Dorsolateral prefrontal cortex (tissue), 120 donors: ENCODE measurements at regions of chr1 and their contacts with region 1.

Region 1: GRCh38 chr1:113677250-113678158 is 81.8 kb downstream of the PHTF1 start:
- DNase-seq: no peak
- H3K4me3 ChIP-seq: no peak overlapping the region
- H3K27ac ChIP-seq: no peak overlapping the region
- H3K27me3 ChIP-seq: no peaks in the 10 kb centered on the region
- CTCF ChIP-seq: peak; percentile 44 to 86 (median 71)

Region 2: GRCh38 chr1:113072757-113073478 is 604.6 kb before region 1 on chr1 and contains the start of gene LRIG2:
- intact Hi-C with region 1: loop called in 1 of 2 experiments (anchors 2 kb)
- DNase-seq: peak; percentile 96 to 99 (median 98)
- H3K4me3 ChIP-seq: peak within 1 kb of the TSS; percentile 68 to 99 (median 90)
- H3K27ac ChIP-seq: peak within 1 kb of the TSS; percentile 61 to 98 (median 91)
- H3K27me3 ChIP-seq: no peaks in the 10 kb centered on the region
- CTCF ChIP-seq: peak; percentile 67 to 98 (median 91)
- total RNA-seq, gene LRIG2: 12.1 to 32.7 (median 20.4) TPM